ENCODE measurements at regions of chr1 and their contacts with region 1.

Region 1: GRCh38 chr1:213649373-213649772 is 338.4 kb upstream of the PROX1 start:
- DNase-seq: no peak
- H3K4me3 ChIP-seq: no peak overlapping the region
- H3K27ac ChIP-seq: no peak overlapping the region
- H3K4me1 ChIP-seq: no peaks in the 10 kb centered on the region
- H3K27me3 ChIP-seq: no peaks in the 10 kb centered on the region
- CTCF ChIP-seq: no peak

Region 2: DNA sequence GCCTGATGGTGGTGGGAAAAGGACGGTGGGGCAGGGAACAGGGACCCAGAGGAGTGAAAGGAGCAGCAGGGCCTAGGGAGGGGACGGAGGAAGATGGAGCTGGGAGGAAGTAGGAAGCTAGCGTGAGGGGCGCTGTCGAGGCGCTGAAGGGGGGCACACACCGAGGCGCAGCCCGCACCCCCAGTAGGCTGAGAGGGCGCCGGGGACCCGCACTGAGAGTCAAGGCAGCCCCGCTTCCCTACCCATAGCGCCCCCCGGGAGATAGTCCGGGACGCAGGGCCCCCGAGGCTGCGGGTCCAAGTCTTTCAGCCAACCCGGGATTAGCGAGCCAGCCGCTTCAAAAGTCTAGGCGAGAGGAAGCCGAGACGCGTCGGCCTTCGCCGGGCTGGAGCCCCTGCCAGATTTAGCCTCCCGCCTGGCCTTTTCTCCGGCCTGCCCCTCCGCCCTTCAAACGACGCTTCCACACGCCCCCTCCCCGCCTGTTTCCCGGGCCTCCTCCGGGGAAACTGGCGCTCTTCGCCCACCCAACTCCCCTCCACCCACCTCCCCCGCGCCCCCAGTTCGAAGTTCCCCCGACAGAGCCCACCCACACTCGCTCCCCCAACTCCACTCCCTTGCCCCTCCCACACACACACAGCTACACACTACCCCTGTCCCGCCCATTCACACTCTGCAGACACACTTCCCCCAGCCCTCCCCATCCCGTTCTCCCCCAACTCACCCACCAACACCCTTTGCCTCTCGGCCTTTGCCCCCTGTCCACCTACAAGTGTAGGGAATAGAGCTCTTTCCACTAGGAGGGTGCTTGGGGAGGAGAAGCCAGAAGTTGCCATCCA is 330.6 kb after region 1 on chr1:
- intact Hi-C with region 1: no loop called
- DNase-seq: no peak
- H3K4me3 ChIP-seq: no peak overlapping the region
- H3K27ac ChIP-seq: no peak overlapping the region
- H3K4me1 ChIP-seq: peaks cover 0 to 15% (median 12%) of the 10 kb centered on the region in 4 donors
- H3K27me3 ChIP-seq: peaks cover 2 to 70% of the 10 kb centered on the region in 2 donors
- CTCF ChIP-seq: no peak

Region 3: GRCh38 chr1:215082532-215083382 is 1433.4 kb after region 1 on chr1 and contains the start of gene KCNK2:
- intact Hi-C with region 1: loop called (anchors 10 kb)
- DNase-seq: peak in 1 of 2 donors; percentile 66
- H3K4me3 ChIP-seq: peak within 1 kb of the TSS; percentile 33
- H3K27ac ChIP-seq: no peak within 1 kb of the TSS
- H3K4me1 ChIP-seq: peaks cover 0 to 17% (median 4%) of the 10 kb centered on the region in 4 donors
- H3K27me3 ChIP-seq: peaks cover 0 to 33% of the 10 kb centered on the region in 2 donors
- CTCF ChIP-seq: no peak